CD8-positive, alpha-beta T cell (primary cell): ENCODE measurements at regions of chr1 and their contacts with region 1.

Region 1: GRCh38 chr1:161071886-161072371 is 2.2 kb upstream of the ARHGAP30 start:
- DNase-seq: peak; percentile 19 to 75 (median 54)
- ATAC-seq: no peak
- H3K4me3 ChIP-seq: no peak overlapping the region
- H3K4me3 Mint-ChIP-seq: no peak overlapping the region
- H3K27ac ChIP-seq: no peak overlapping the region
- H3K27ac Mint-ChIP-seq: peak overlapping the region; percentile 83
- H3K4me1 ChIP-seq: peaks cover 31% of the 10 kb centered on the region
- H3K4me1 Mint-ChIP-seq: peaks cover 40% of the 10 kb centered on the region
- H3K27me3 ChIP-seq: no peaks in the 10 kb centered on the region
- H3K27me3 Mint-ChIP-seq: no peaks in the 10 kb centered on the region
- CTCF ChIP-seq: peak; percentile 70

Region 2: GRCh38 chr1:160874935-160875334 is 197.0 kb before region 1 on chr1:
- CTCF ChIA-PET with region 1: no interaction called
- POLR2A ChIA-PET with region 1: no interaction called
- intact Hi-C with region 1: no loop called
- DNase-seq: peak in 1 of 9 experiments; percentile 25
- ATAC-seq: no peak
- H3K4me3 ChIP-seq: no peak overlapping the region
- H3K4me3 Mint-ChIP-seq: no peak overlapping the region
- H3K27ac ChIP-seq: no peak overlapping the region
- H3K27ac Mint-ChIP-seq: peak overlapping the region; percentile 50
- H3K4me1 ChIP-seq: peaks cover 11% of the 10 kb centered on the region
- H3K4me1 Mint-ChIP-seq: peaks cover 27% of the 10 kb centered on the region
- H3K27me3 ChIP-seq: no peaks in the 10 kb centered on the region
- H3K27me3 Mint-ChIP-seq: no peaks in the 10 kb centered on the region
- CTCF ChIP-seq: no peak

Region 3: DNA sequence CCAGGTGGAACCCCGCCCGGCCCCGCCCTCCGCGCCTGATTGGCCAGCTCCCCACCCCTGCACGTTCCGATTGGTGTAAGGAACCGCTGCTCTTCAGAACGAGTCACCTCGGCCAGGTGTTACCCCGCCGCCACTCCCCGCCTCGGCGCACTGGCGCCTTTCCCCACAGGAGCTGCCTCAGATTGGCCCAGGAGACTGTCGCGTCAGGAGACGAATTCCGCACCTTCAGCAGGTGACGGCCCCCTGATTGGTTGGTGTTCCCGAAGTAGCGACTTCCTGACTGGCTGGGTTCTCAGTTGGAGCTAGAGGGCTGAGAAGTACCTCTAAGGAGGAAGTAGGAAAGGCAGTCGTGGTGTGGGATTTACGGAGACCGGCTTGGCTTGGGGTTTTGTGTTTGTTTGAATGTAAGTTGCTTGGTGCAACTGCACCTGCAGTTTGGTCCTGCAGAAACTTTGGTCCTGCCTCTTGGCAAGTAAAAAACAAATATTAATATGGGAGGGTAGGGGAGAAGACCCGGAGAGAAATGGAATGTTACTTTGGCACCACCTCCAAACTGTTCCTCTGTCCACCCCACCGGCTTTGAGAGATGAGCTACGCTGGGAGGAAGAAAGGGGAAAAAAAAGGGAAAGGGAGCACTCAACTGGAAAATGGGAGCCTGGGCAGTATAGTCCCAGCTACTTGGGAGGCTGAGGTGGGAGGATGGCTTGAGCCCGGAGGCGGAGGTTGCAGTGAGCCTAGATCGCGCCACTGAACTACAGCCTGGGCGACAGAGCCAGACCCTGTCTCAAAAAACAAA is 50.6 kb before region 1 on chr1:
- CTCF ChIA-PET with region 1: interaction called, 4 read pairs
- POLR2A ChIA-PET with region 1: interaction called, 18 read pairs
- intact Hi-C with region 1: no loop called
- DNase-seq: peak; percentile 75 to 95 (median 89)
- ATAC-seq: peak; percentile 94
- H3K4me3 ChIP-seq: peak overlapping the region; percentile 51 to 89
- H3K4me3 Mint-ChIP-seq: peak overlapping the region; percentile 93
- H3K27ac ChIP-seq: peak overlapping the region; percentile 22 to 73
- H3K27ac Mint-ChIP-seq: peak overlapping the region; percentile 83
- H3K4me1 ChIP-seq: peaks cover 14% of the 10 kb centered on the region
- H3K4me1 Mint-ChIP-seq: peaks cover 37% of the 10 kb centered on the region
- H3K27me3 ChIP-seq: no peaks in the 10 kb centered on the region
- H3K27me3 Mint-ChIP-seq: no peaks in the 10 kb centered on the region
- CTCF ChIP-seq: no peak

Region 4: DNA sequence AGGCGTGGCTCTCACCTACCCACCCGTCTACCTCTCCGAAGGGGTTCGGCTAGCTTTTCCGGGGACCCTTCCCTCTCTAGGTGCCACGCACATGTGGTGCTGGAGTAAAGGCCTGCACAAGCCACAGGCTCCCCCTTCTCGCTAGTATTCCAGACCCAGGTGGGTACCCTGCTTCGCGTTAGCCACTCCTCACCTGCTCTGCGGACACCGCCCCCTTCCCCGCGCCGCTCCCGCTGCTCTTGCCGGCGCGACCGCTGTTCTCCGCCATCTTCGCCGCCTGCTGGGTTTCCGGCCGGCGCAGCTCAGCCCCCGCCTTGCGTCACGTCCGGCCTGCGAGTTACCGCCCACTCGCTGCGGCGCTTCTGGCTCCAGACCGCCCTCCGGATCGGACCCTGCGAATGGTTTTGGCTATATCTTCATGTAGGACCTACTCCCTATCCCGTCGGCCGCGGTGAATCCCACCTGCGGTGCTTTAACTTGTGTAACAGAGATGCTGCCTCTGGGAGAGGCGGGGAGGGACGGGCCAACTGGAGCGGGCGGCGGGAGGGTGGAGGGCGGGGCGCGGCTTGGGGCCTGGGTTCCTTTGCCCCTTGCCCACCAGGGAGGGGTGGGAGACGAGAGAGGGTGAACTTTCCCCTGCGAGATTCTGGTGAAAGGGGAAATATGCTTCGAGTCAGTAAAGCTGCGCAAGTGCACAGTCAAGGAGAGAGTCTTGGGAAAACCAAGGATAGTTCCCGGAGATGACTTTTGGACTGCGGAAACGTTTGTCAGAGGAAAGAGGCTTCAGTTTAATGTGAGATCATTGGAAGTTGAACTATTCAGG is 46.0 kb after region 1 on chr1 and contains the starts of genes NIT1 and PFDN2:
- CTCF ChIA-PET with region 1: interaction called, 4 read pairs
- POLR2A ChIA-PET with region 1: interaction called, 5 read pairs
- intact Hi-C with region 1: loop called in 1 of 2 experiments (anchors 1 kb)
- DNase-seq: peak; percentile 67 to 93 (median 84)
- ATAC-seq: peak; percentile 72
- H3K4me3 ChIP-seq: peak within 1 kb of the TSS; percentile 95 to 96
- H3K4me3 Mint-ChIP-seq: peak within 1 kb of the TSS; percentile 93
- H3K27ac ChIP-seq: peak within 1 kb of the TSS; percentile 91 to 93
- H3K27ac Mint-ChIP-seq: peak within 1 kb of the TSS; percentile 95
- H3K4me1 ChIP-seq: peaks cover 43% of the 10 kb centered on the region
- H3K4me1 Mint-ChIP-seq: peaks cover 60% of the 10 kb centered on the region
- H3K27me3 ChIP-seq: no peaks in the 10 kb centered on the region
- H3K27me3 Mint-ChIP-seq: no peaks in the 10 kb centered on the region
- CTCF ChIP-seq: no peak
- total RNA-seq, gene NIT1: 11.5 to 12.8 TPM
- total RNA-seq, gene PFDN2: 64.7 to 75.5 TPM

Region 5: DNA sequence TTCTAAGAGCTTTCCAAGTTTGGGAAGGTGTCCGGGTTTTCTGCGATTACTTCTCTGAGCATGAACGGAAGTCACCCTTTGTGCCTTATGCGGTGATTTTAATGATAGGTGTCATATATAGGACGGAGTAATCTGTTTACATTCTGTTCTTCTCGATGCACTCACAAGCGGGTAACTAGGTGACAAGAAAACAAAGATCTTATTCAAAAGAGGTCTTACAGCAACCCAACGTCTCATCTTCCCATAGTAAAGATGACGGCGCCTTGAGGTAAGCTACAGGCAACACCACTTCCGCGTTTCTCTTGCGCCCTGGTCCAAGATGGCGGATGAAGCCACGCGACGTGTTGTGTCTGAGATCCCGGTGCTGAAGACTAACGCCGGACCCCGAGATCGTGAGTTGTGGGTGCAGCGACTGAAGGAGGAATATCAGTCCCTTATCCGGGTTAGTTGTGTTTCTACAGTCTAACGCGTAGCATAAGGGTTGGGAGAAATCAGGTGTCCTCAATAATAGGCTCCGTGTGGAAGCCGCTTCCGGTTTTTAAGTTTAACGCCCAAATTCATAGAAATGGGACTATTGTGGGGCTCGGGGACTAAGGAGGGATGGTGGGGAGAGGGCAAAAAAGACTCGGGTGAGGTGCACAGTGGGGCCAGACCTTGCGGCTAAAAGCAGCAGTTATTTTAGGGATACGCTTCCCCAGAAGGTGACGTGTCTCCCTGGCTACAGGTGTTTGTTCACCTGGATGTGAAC is 81.9 kb after region 1 on chr1 and contains the start of gene UFC1:
- CTCF ChIA-PET with region 1: interaction called, 4 read pairs
- POLR2A ChIA-PET with region 1: interaction called, 20 read pairs
- intact Hi-C with region 1: loop called (anchors 1 to 5 kb)
- DNase-seq: peak; percentile 66 to 96 (median 78)
- ATAC-seq: peak; percentile 92
- H3K4me3 ChIP-seq: peak within 1 kb of the TSS; percentile 95 to 98
- H3K4me3 Mint-ChIP-seq: peak within 1 kb of the TSS; percentile 96
- H3K27ac ChIP-seq: peak within 1 kb of the TSS; percentile 98 to 99
- H3K27ac Mint-ChIP-seq: peak within 1 kb of the TSS; percentile 100
- H3K4me1 ChIP-seq: peaks cover 17% of the 10 kb centered on the region
- H3K4me1 Mint-ChIP-seq: peaks cover 30% of the 10 kb centered on the region
- H3K27me3 ChIP-seq: no peaks in the 10 kb centered on the region
- H3K27me3 Mint-ChIP-seq: no peaks in the 10 kb centered on the region
- CTCF ChIP-seq: no peak
- total RNA-seq, gene UFC1: 94.7 to 96.6 TPM

Region 6: DNA sequence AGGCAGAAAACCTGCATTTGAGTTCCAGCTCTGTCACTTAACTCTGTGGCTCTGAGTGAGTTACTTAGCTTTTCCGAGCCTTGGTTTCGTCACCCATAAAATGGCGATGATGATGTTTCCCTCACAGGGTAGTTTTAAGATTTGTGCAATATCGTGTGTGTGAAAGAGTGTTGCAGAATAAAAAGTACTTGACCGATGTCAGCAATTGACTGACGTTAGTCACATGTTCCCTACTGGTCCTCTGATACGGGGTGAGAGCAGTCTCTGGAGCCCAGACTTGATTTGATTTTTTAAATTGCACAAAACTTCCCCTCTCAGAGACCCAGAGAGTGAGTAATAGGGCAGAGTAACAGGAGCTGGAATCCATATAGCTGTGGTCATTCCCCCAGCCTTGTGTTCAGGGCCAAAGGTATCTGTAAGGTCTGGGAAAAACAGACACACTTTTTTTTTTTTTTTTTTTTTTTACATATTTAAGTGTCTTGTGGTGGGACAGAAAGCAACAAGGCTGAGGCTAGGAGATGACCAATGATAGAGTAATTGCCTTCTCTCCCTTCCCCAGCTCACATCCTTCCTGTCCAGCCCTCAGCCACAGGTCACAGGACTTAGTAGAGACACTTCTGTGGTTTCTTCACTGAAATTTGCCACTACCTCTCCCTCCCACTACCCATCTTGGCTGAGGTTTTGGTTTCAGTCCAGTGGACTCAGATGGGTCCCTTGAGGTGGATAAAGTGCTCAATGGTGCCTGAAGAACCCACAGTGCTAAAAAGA is 145.2 kb after region 1 on chr1:
- CTCF ChIA-PET with region 1: no interaction called
- POLR2A ChIA-PET with region 1: no interaction called
- intact Hi-C with region 1: no loop called
- DNase-seq: peak in 3 of 9 experiments; percentile 32 to 58 (median 42)
- ATAC-seq: peak; percentile 12
- H3K4me3 ChIP-seq: peak overlapping the region; percentile 20 to 25
- H3K4me3 Mint-ChIP-seq: peak overlapping the region; percentile 54
- H3K27ac ChIP-seq: peak overlapping the region; percentile 18 to 75
- H3K27ac Mint-ChIP-seq: peak overlapping the region; percentile 91
- H3K4me1 ChIP-seq: peaks cover 56% of the 10 kb centered on the region
- H3K4me1 Mint-ChIP-seq: peaks cover 59% of the 10 kb centered on the region
- H3K27me3 ChIP-seq: no peaks in the 10 kb centered on the region
- H3K27me3 Mint-ChIP-seq: no peaks in the 10 kb centered on the region
- CTCF ChIP-seq: no peak

Region 7: DNA sequence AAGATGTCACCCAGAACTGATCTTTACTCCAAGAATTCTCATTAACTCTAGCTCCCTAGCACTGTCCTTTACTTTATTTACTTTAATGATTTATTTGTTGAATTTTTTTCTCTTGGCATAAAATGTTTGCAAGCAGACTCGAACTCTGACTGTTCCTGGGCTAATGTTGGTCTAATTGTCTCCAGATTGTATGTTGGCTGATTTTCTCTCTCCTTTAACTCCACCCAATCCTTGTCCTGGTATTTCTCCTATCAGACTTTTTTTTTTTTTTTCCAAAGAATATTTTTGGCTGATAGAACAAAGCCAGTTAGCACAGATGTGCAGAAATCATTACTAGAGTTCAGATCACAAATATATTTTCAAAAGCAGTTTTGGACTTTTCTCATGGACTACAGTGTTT is 776.7 kb after region 1 on chr1:
- CTCF ChIA-PET with region 1: no interaction called
- POLR2A ChIA-PET with region 1: no interaction called
- intact Hi-C with region 1: no loop called
- DNase-seq: no peak
- ATAC-seq: no peak
- H3K4me3 ChIP-seq: no peak overlapping the region
- H3K4me3 Mint-ChIP-seq: no peak overlapping the region
- H3K27ac ChIP-seq: no peak overlapping the region
- H3K27ac Mint-ChIP-seq: no peak overlapping the region
- H3K4me1 ChIP-seq: no peaks in the 10 kb centered on the region
- H3K4me1 Mint-ChIP-seq: no peaks in the 10 kb centered on the region
- H3K27me3 ChIP-seq: no peaks in the 10 kb centered on the region
- H3K27me3 Mint-ChIP-seq: no peaks in the 10 kb centered on the region
- CTCF ChIP-seq: no peak